ENCODE measurements at regions of chr4 and their contacts with region 1.

Region 1: DNA sequence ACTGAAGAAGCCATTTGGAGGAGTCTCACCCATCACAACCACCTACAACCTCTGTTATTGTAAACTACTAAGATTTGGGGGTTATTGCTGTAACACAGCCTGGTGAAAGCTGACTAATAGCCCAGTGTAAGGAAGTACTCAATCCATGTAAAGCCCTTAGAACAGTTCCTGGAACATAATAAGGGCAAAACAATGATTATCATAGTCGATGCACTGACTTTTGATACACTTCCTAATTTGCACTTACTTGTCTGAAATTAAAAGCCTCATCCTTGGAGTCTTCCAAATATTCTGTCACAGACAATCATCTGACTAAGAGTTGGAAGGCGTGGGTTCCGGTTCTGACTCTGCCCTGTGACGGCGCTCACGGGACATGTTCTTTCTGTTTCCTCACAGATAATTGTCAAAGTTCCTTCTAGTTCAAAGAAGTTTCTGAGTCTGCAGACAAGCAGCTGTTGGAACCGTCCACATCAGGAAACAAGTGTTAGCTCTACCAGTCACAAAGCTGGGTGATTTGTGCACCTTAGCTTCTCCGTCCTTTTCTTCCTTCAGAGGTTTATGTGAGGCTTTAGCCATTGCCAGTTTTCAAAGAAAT is 33.4 kb upstream of the RASGEF1B start:
- DNase-seq: peak; percentile 82
- H3K4me3 Mint-ChIP-seq: peak overlapping the region; percentile 31
- H3K27ac Mint-ChIP-seq: peak overlapping the region; percentile 18
- H3K4me1 Mint-ChIP-seq: peaks cover 30% of the 10 kb centered on the region
- H3K27me3 Mint-ChIP-seq: no peaks in the 10 kb centered on the region

Region 2: GRCh38 chr4:81494031-81494431 is 11.1 kb before region 1 on chr4:
- CTCF ChIA-PET with region 1: interaction called, 3 read pairs
- POLR2A ChIA-PET with region 1: no interaction called
- intact Hi-C with region 1: loop called (anchors 1 kb)
- DNase-seq: no peak
- H3K4me3 Mint-ChIP-seq: no peak overlapping the region
- H3K27ac Mint-ChIP-seq: peak overlapping the region; percentile 64
- H3K4me1 Mint-ChIP-seq: peaks cover 47% of the 10 kb centered on the region
- H3K27me3 Mint-ChIP-seq: no peaks in the 10 kb centered on the region

Region 3: GRCh38 chr4:81562093-81562492 is 57.0 kb after region 1 on chr4:
- CTCF ChIA-PET with region 1: no interaction called
- POLR2A ChIA-PET with region 1: no interaction called
- intact Hi-C with region 1: loop called (anchors 5 kb)
- DNase-seq: no peak
- H3K4me3 Mint-ChIP-seq: no peak overlapping the region
- H3K27ac Mint-ChIP-seq: no peak overlapping the region
- H3K4me1 Mint-ChIP-seq: peaks cover 10% of the 10 kb centered on the region
- H3K27me3 Mint-ChIP-seq: no peaks in the 10 kb centered on the region

Region 4: GRCh38 chr4:81589262-81589661 is 84.2 kb after region 1 on chr4:
- CTCF ChIA-PET with region 1: no interaction called
- POLR2A ChIA-PET with region 1: no interaction called
- intact Hi-C with region 1: loop called (anchors 1 kb)
- DNase-seq: no peak
- H3K4me3 Mint-ChIP-seq: no peak overlapping the region
- H3K27ac Mint-ChIP-seq: no peak overlapping the region
- H3K4me1 Mint-ChIP-seq: peaks cover 9% of the 10 kb centered on the region
- H3K27me3 Mint-ChIP-seq: no peaks in the 10 kb centered on the region

Measured in activated CD4-positive, alpha-beta memory T cell treated with anti-CD3 and anti-CD28 coated beads for 36 hours (primary cell).